Mammary epithelial cell (primary cell): ENCODE measurements at regions of chr3 and their contacts with region 1.

Region 1: DNA sequence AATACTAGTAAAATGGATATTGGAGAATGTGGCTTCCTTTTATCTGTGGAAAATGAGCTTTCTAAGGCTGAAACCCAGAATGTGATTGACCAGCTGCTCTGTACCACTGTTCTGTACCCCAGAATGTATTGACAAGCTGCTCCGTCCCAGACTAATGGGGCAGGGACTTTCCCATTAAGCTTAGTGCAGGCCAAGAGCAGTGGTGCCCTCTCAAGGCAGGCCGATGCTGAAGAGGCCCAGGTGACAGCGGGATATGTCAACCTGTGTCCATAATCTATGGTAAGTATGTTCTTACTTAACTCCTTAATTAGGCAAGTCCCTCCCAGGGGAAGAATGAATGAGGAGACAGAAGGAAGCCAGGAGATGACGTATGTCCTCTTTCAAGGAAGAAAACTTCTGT is 31.1 kb downstream of the SGO1 start:
- DNase-seq: no peak
- H3K4me3 ChIP-seq: no peak overlapping the region
- H3K27ac ChIP-seq: no peak overlapping the region
- H3K4me1 ChIP-seq: no peaks in the 10 kb centered on the region
- H3K27me3 ChIP-seq: no peaks in the 10 kb centered on the region
- CTCF ChIP-seq: peak in 1 of 2 donors; percentile 26

Region 2: GRCh38 chr3:20218215-20218614 is 63.3 kb after region 1 on chr3:
- CTCF ChIA-PET with region 1: no interaction called
- dilution Hi-C with region 1: no loop called
- in situ Hi-C with region 1: no loop called
- intact Hi-C with region 1: loop called (anchors 2 kb)
- DNase-seq: no peak
- H3K4me3 ChIP-seq: no peak overlapping the region
- H3K27ac ChIP-seq: no peak overlapping the region
- H3K4me1 ChIP-seq: no peaks in the 10 kb centered on the region
- H3K27me3 ChIP-seq: no peaks in the 10 kb centered on the region
- CTCF ChIP-seq: no peak